Activated CD8-positive, alpha-beta T cell treated with anti-CD3 and anti-CD28 coated beads for 36 hours (primary cell): ENCODE measurements at regions of chr11 and their contacts with region 1.

Region 1: DNA sequence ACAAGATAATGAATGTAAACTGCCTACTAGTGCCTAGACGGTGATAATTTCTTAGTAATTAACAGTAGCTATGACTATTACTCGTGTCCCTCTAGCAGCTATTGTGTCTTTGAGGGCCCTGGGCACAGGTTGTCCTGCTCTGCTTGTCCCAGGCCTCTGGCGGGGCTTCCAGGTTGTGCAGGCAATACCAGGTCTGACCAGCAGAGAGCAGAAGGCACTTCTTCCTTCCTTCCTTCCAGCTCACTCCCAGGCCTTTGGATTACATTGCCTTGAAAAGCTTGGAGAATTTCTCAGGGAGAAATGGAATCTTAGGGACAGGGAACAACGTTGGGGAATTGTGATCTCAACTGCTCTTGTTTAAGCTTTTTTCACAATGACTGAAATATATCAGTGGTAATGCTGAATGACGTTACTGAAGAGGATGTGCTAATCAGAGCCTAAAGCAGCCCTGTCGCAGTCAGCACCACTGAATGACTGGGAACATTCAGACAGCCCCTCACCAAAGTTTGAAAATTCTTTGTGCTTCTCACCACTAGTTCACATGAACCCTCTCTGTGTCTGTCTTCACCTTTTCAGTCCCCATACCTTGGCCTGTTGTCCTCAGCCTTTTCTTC is 8.4 kb upstream of the CCKBR start:
- DNase-seq: peak; percentile 73
- ATAC-seq: peak; percentile 96
- H3K4me3 Mint-ChIP-seq: no peak overlapping the region
- H3K27ac Mint-ChIP-seq: no peak overlapping the region
- H3K4me1 Mint-ChIP-seq: no peaks in the 10 kb centered on the region
- H3K27me3 Mint-ChIP-seq: no peaks in the 10 kb centered on the region
- CTCF ChIP-seq: peak; percentile 87

Region 2: DNA sequence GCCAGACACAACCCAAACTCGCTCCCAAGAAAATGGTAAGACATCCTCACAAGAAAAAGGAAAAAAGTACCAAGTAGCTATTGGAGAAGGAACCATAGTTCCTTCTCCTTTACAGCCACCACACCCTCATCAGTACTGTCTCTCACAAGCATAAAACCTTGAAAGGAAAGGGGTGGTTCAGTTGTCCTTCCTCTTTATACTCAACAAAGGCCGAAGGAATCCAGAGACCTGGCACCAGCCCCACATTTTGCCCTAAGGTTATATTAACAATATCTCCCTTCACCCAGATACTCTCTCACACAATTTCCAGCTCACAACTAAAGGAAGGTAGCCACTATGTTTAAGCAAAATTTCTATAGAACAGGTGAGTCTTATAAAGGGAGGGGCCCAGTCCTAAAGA is 25.3 kb before region 1 on chr11:
- CTCF ChIA-PET with region 1: interaction called, 12 read pairs
- POLR2A ChIA-PET with region 1: no interaction called
- intact Hi-C with region 1: no loop called
- DNase-seq: no peak
- ATAC-seq: no peak
- H3K4me3 Mint-ChIP-seq: no peak overlapping the region
- H3K27ac Mint-ChIP-seq: no peak overlapping the region
- H3K4me1 Mint-ChIP-seq: peaks cover 35% of the 10 kb centered on the region
- H3K27me3 Mint-ChIP-seq: no peaks in the 10 kb centered on the region
- CTCF ChIP-seq: no peak

Region 3: GRCh38 chr11:6234387-6235107 is 16.7 kb before region 1 on chr11 and contains the start of gene FHIP1B:
- CTCF ChIA-PET with region 1: interaction called, 45 read pairs
- POLR2A ChIA-PET with region 1: interaction called, 3 read pairs
- intact Hi-C with region 1: no loop called
- DNase-seq: peak; percentile 100
- ATAC-seq: peak; percentile 94
- H3K4me3 Mint-ChIP-seq: peak within 1 kb of the TSS; percentile 93
- H3K27ac Mint-ChIP-seq: peak within 1 kb of the TSS; percentile 94
- H3K4me1 Mint-ChIP-seq: peaks cover 39% of the 10 kb centered on the region
- H3K27me3 Mint-ChIP-seq: no peaks in the 10 kb centered on the region
- CTCF ChIP-seq: no peak
- total RNA-seq, gene FHIP1B: 14.9 to 15.1 TPM

Region 4: DNA sequence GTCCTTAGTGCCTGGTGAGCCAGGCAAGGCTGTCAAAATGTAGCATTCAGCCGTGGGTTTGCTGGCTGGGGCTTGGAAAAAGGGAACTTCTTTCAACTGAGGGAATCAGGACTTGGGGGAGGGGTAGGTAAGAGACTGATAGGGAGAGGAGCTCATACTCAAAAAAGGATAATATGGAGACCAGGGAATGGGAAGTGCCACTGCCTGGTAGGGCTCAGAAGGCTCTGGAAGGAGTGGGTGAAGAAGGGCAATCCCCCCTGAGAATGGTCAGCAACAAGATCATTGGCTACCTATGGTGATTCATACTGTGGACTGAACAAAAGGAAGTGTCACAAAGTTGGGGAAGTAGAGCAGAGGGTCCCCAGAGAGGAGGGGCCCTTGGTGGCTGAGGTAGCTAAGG is 10.4 kb before region 1 on chr11:
- CTCF ChIA-PET with region 1: interaction called, 45 read pairs
- POLR2A ChIA-PET with region 1: interaction called, 3 read pairs
- intact Hi-C with region 1: no loop called
- DNase-seq: no peak
- ATAC-seq: no peak
- H3K4me3 Mint-ChIP-seq: no peak overlapping the region
- H3K27ac Mint-ChIP-seq: no peak overlapping the region
- H3K4me1 Mint-ChIP-seq: no peaks in the 10 kb centered on the region
- H3K27me3 Mint-ChIP-seq: peaks cover 2% of the 10 kb centered on the region
- CTCF ChIP-seq: no peak

Region 5: GRCh38 chr11:6285019-6285418 is 33.8 kb after region 1 on chr11:
- CTCF ChIA-PET with region 1: interaction called, 14 read pairs
- POLR2A ChIA-PET with region 1: no interaction called
- intact Hi-C with region 1: no loop called
- DNase-seq: no peak
- ATAC-seq: no peak
- H3K4me3 Mint-ChIP-seq: no peak overlapping the region
- H3K27ac Mint-ChIP-seq: no peak overlapping the region
- H3K4me1 Mint-ChIP-seq: no peaks in the 10 kb centered on the region
- H3K27me3 Mint-ChIP-seq: peaks cover 45% of the 10 kb centered on the region
- CTCF ChIP-seq: no peak

Region 6: GRCh38 chr11:6315811-6316425 is 64.7 kb after region 1 on chr11:
- CTCF ChIA-PET with region 1: interaction called, 21 read pairs
- POLR2A ChIA-PET with region 1: no interaction called
- intact Hi-C with region 1: no loop called
- DNase-seq: peak; percentile 57
- ATAC-seq: peak; percentile 43
- H3K4me3 Mint-ChIP-seq: no peak overlapping the region
- H3K27ac Mint-ChIP-seq: no peak overlapping the region
- H3K4me1 Mint-ChIP-seq: peaks cover 20% of the 10 kb centered on the region
- H3K27me3 Mint-ChIP-seq: peaks cover 40% of the 10 kb centered on the region
- CTCF ChIP-seq: peak; percentile 76

Region 7: GRCh38 chr11:6333112-6333511 is 81.9 kb after region 1 on chr11:
- CTCF ChIA-PET with region 1: no interaction called
- POLR2A ChIA-PET with region 1: no interaction called
- intact Hi-C with region 1: no loop called
- DNase-seq: no peak
- ATAC-seq: no peak
- H3K4me3 Mint-ChIP-seq: no peak overlapping the region
- H3K27ac Mint-ChIP-seq: no peak overlapping the region
- H3K4me1 Mint-ChIP-seq: no peaks in the 10 kb centered on the region
- H3K27me3 Mint-ChIP-seq: peaks cover 14% of the 10 kb centered on the region
- CTCF ChIP-seq: no peak

Region 8: GRCh38 chr11:6389921-6390724 is 138.9 kb after region 1 on chr11 and contains the start of gene SMPD1:
- CTCF ChIA-PET with region 1: no interaction called
- POLR2A ChIA-PET with region 1: no interaction called
- intact Hi-C with region 1: no loop called
- DNase-seq: peak; percentile 95
- ATAC-seq: peak; percentile 83
- H3K4me3 Mint-ChIP-seq: peak within 1 kb of the TSS; percentile 79
- H3K27ac Mint-ChIP-seq: peak within 1 kb of the TSS; percentile 94
- H3K4me1 Mint-ChIP-seq: peaks cover 44% of the 10 kb centered on the region
- H3K27me3 Mint-ChIP-seq: no peaks in the 10 kb centered on the region
- CTCF ChIP-seq: no peak
- total RNA-seq, gene SMPD1: 10.6 to 11.2 TPM